ENCODE measurements at regions of chrX and their contacts with region 1.

Region 1: DNA sequence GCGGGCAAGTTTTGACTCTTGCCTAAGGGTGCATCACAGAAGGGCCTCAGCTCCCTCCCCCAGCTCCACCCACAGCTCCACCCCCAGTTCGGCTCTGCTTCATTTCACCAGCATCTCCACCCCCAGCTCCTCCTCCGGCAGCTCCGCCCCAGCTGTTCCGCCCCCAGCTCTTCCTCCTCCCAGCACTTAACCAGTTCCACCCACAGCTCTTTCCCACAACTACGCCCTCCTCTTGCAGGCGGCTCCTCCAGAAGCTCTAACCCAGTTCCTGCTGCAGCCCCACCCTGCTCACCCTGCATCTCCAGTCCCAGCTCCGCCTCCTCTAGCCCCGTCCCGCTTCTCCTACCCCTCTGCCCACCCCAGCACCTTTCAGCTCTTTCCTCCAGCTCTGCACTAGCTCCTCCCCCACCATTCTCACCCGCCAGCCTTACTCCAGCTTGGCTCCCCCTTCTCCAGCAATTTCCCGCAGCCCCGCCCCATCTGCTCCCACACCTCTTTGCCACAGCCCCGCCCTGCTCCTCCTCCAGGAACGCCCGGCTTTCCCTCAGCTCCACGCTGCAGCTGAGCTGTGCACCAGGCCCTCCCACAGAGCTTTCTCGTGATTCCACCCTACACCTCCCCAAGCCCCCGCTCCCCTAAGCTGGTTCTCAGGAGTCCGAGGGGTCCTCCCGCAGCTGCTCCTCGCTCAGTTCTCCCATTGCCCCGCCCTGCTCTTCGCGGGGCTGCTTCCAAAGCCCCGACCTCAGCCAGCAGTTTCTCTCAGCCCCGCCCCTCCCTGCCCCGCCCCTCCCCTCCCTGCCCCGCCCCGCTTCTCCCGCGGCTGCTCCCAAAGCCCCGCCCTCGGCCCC is 1.3 kb upstream of the EOLA1 start:
- DNase-seq: peak; percentile 65 to 91 (median 86)
- ATAC-seq: peak; percentile 67
- H3K4me3 ChIP-seq: peak overlapping the region; percentile 66
- H3K4me3 Mint-ChIP-seq: peak overlapping the region; percentile 74 to 99 (median 90)
- H3K27ac ChIP-seq: peak overlapping the region; percentile 90
- H3K27ac Mint-ChIP-seq: peak overlapping the region; percentile 88 to 100 (median 94)
- H3K4me1 ChIP-seq: peaks cover 3 to 5% of the 10 kb centered on the region in 2 donors
- H3K4me1 Mint-ChIP-seq: peaks cover 0 to 15% (median 4%) of the 10 kb centered on the region in 7 donors
- H3K27me3 ChIP-seq: no peaks in the 10 kb centered on the region
- H3K27me3 Mint-ChIP-seq: no peaks in the 10 kb centered on the region

Region 2: GRCh38 chrX:149504915-149505651 is 34.4 kb before region 1 on chrX and contains the start of gene IDS:
- CTCF ChIA-PET with region 1: interaction called, 9 read pairs
- POLR2A ChIA-PET with region 1: interaction called, 33 read pairs
- intact Hi-C with region 1: loop called (anchors 1 to 2 kb)
- DNase-seq: peak; percentile 68 to 88 (median 81)
- ATAC-seq: peak; percentile 85
- H3K4me3 ChIP-seq: peak within 1 kb of the TSS; percentile 72
- H3K4me3 Mint-ChIP-seq: peak within 1 kb of the TSS; percentile 86 to 100 (median 91)
- H3K27ac ChIP-seq: peak within 1 kb of the TSS; percentile 98
- H3K27ac Mint-ChIP-seq: peak within 1 kb of the TSS; percentile 87 to 98 (median 94)
- H3K4me1 ChIP-seq: peaks cover 6 to 13% of the 10 kb centered on the region in 2 donors
- H3K4me1 Mint-ChIP-seq: peaks cover 14 to 42% (median 23%) of the 10 kb centered on the region in 7 donors
- H3K27me3 ChIP-seq: no peaks in the 10 kb centered on the region
- H3K27me3 Mint-ChIP-seq: peaks cover 0 to 8% (median 0%) of the 10 kb centered on the region in 5 donors
- total RNA-seq, gene IDS: 73.1 to 317 (median 133) TPM

Region 3: GRCh38 chrX:149521438-149521837 is 18.1 kb before region 1 on chrX:
- CTCF ChIA-PET with region 1: interaction called, 3 read pairs
- POLR2A ChIA-PET with region 1: interaction called, 12 read pairs
- intact Hi-C with region 1: no loop called
- DNase-seq: peak in 7 of 9 donors; percentile 17 to 51 (median 49)
- ATAC-seq: peak; percentile 30
- H3K4me3 ChIP-seq: no peak overlapping the region
- H3K4me3 Mint-ChIP-seq: peak overlapping the region; percentile 36 to 80 (median 68)
- H3K27ac ChIP-seq: no peak overlapping the region
- H3K27ac Mint-ChIP-seq: peak overlapping the region in 6 of 9 donors; percentile 21 to 79 (median 54)
- H3K4me1 ChIP-seq: peaks cover 32 to 48% of the 10 kb centered on the region in 2 donors
- H3K4me1 Mint-ChIP-seq: peaks cover 15 to 58% (median 32%) of the 10 kb centered on the region in 7 donors
- H3K27me3 ChIP-seq: no peaks in the 10 kb centered on the region
- H3K27me3 Mint-ChIP-seq: no peaks in the 10 kb centered on the region

Region 4: DNA sequence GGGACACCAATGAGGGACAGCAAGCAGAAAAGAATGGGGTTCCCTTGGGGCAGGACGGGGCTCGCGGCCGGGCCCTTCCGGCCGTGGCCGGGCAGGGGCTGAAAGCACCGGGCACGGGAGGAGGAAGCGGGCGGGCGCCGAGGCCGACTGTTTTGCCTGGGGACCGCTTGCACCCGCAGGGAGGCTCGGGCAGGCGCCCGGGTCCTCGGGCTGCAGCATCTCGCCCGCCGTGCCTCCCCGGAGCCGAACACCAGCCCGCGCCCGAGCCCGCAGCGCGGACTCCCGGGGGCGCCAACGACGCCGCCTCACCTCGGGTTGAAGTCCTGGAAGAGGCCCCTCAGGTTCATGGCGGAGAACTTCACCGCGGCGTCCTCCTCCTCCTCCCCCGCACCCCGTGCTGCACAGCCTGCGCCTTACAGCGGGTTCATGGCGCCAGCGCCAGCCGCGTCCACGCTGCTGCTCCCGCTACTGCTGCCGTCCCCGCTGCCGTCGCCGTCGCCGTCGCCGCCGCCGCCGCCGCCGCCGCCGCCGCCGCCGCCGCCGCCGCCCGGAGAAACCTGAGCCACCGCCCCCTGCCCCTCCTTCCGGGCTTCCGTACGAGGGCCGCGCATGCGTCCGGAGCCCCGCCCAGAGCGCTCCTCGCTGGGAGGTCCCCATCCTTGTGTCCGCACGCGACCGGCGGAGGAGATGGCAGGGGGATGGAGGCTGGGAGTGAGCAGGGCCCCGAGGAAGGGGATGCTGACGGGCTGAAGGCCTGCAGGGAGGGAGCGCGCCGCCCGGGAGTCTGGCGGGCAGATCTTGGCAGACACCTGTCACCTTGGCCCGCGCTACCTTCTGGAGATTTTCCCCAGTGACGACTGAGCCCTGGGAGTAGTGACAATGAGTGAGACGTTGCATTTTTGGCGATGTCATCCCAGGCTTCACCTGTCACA is 92.0 kb after region 1 on chrX and contains the start of gene TMEM185A:
- CTCF ChIA-PET with region 1: no interaction called
- POLR2A ChIA-PET with region 1: no interaction called
- intact Hi-C with region 1: loop called (anchors 5 to 10 kb)
- DNase-seq: peak; percentile 48 to 79 (median 71)
- ATAC-seq: peak; percentile 92
- H3K4me3 ChIP-seq: peak within 1 kb of the TSS; percentile 68
- H3K4me3 Mint-ChIP-seq: peak within 1 kb of the TSS; percentile 84 to 98 (median 92)
- H3K27ac ChIP-seq: peak within 1 kb of the TSS; percentile 72
- H3K27ac Mint-ChIP-seq: peak within 1 kb of the TSS; percentile 78 to 94 (median 83)
- H3K4me1 ChIP-seq: peaks cover 12% of the 10 kb centered on the region in 2 donors
- H3K4me1 Mint-ChIP-seq: peaks cover 29 to 43% (median 39%) of the 10 kb centered on the region in 7 donors
- H3K27me3 ChIP-seq: no peaks in the 10 kb centered on the region
- H3K27me3 Mint-ChIP-seq: peaks cover 0 to 9% (median 0%) of the 10 kb centered on the region in 5 donors
- total RNA-seq, gene TMEM185A: 11.9 to 23.4 (median 19.9) TPM

Region 5: DNA sequence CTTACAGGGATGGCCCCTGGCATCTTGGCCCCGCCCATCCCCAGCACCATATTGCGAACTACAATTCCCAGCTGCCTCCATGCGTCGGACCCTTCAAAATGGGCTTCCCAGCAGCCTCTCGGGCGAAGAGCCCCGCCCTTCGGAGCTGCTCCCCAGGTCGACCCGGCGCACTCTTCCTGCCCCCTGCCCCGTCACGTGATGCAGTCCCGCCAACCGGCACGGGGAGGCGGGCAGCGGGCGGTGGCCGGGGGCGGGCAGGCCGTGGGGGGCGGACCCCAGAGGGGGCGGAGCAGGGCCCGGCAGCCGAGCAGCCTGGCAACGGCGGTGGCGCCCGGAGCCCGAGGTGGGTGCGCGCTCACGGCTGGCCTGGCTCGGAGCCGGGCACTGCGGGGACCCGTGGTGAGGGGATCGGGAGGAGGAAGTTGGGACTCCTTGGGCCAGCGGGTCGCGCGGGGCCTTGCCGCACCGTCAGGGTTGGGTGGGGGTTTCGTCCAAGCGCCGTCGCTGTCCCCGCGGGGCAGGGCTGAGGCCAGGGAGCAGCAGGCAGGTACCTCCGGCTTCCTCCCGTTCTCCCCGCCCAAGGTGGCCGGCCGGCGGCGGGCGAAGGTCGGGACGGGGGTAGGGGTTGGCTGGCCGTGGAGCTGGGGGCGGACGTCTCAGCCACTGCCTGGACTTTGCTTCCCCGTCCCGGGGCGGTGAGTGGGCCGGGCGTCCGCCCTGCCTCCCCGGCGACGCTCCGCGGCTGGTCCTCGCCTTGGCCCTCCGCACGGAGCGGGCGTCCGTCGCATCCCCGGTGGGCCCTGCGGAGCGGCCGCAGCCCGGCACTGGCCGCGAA is 1029.0 kb after region 1 on chrX and contains the start of gene MTM1:
- CTCF ChIA-PET with region 1: no interaction called
- POLR2A ChIA-PET with region 1: no interaction called
- intact Hi-C with region 1: loop called (anchors 1 to 5 kb)
- DNase-seq: peak; percentile 80 to 93 (median 90)
- ATAC-seq: peak; percentile 96
- H3K4me3 ChIP-seq: peak within 1 kb of the TSS; percentile 71
- H3K4me3 Mint-ChIP-seq: peak within 1 kb of the TSS; percentile 68 to 92 (median 90)
- H3K27ac ChIP-seq: peak within 1 kb of the TSS; percentile 75
- H3K27ac Mint-ChIP-seq: peak within 1 kb of the TSS; percentile 81 to 92 (median 89)
- H3K4me1 ChIP-seq: peaks cover 31 to 36% of the 10 kb centered on the region in 2 donors
- H3K4me1 Mint-ChIP-seq: peaks cover 6 to 45% (median 41%) of the 10 kb centered on the region in 7 donors
- H3K27me3 ChIP-seq: no peaks in the 10 kb centered on the region
- H3K27me3 Mint-ChIP-seq: no peaks in the 10 kb centered on the region
- total RNA-seq, gene MTM1: 21.8 to 34.7 (median 28.8) TPM

Region 6: DNA sequence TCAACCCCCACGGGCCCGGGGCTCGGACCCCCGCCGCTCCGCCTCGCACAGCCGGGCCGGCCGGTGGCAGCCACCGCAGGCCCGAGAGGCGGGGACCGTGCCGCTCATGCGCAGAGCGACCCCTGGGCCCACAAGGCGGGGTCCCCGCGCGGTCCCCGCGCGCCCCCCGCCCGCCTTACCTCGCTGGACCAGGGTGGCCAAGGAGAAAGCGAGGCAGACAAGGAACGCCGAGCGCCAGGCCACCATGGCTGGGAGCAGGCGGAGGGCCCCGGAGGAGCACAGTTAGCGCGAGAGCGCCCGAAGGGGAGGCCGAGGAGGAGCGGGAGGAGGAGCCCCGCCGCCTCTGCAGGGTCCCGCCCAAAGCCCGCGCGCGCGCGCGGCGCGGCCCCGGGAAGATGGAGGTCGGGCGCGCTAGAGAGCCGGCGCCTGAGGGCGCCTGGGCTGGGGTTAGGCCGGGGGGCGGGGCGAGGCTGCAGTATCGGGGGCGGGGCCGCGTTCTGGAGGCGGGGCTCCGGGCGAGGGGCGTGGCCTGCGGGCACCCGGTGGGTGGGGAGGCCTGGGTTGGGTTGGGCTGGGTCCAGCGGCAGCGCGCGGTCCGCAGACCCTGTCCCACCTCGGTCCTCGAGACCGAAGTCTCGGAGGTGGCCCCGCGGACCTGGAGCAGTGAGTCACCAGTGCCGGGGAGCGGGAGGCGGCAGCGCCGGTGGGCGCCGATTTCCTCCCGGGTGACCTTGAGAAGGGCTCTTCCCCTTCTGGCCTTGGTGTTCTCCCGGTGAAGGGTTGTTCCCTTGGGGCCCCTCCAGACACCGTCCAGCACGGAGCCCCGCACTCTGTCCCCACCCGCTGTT is 1359.1 kb after region 1 on chrX and contains the start of gene CD99L2:
- CTCF ChIA-PET with region 1: no interaction called
- POLR2A ChIA-PET with region 1: no interaction called
- intact Hi-C with region 1: loop called in 1 of 2 experiments (anchors 10 kb)
- DNase-seq: peak; percentile 79 to 92 (median 85)
- ATAC-seq: peak; percentile 98
- H3K4me3 ChIP-seq: peak within 1 kb of the TSS; percentile 71
- H3K4me3 Mint-ChIP-seq: peak within 1 kb of the TSS; percentile 76 to 96 (median 90)
- H3K27ac ChIP-seq: peak within 1 kb of the TSS; percentile 89
- H3K27ac Mint-ChIP-seq: peak within 1 kb of the TSS in 8 of 9 donors; percentile 31 to 90 (median 76)
- H3K4me1 ChIP-seq: peaks cover 0 to 4% of the 10 kb centered on the region in 2 donors
- H3K4me1 Mint-ChIP-seq: peaks cover 0 to 16% (median 6%) of the 10 kb centered on the region in 7 donors
- H3K27me3 ChIP-seq: no peaks in the 10 kb centered on the region
- H3K27me3 Mint-ChIP-seq: peaks cover 0 to 26% (median 0%) of the 10 kb centered on the region in 5 donors
- total RNA-seq, gene CD99L2: 14.3 to 20.4 (median 15.6) TPM